GM12878 (cell line): ENCODE measurements at regions of chr19 and their contacts with region 1.

Region 1: DNA sequence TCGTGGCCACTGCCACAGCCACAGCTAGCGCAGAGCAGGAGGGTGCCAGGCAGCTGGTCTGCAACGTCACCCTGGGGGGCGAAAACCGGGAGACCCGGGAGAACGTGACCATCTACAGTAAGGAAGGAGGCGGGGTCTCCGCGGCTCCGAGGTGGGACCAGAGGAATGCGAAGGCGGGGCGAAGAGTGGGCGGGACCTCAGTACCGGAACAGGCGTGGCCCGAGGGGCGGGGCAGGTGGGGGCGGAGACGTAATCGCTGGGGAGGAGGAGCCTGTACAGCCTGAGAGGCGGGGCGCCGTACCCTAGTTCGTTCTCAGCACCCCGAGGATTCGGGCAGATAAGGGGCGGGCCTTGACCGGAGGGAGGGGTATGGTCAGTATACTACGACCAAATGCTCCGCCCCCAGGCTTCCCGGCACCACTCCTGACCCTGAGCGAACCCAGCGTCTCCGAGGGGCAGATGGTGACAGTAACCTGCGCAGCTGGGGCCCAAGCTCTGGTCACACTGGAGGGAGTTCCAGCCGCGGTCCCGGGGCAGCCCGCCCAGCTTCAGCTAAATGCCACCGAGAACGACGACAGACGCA is 2.5 kb downstream of the ICAM5 start:
- DNase-seq: no peak
- ATAC-seq: peak; percentile 65
- H3K4me3 ChIP-seq: peak overlapping the region; percentile 77
- H3K27ac ChIP-seq: no peak overlapping the region
- H3K4me1 ChIP-seq: peaks cover 53% of the 10 kb centered on the region
- H3K27me3 ChIP-seq: peaks cover 3 to 16% of the 10 kb centered on the region in 2 experiments
- CTCF ChIP-seq: no peak
- EP300 ChIP-seq: no peak
- POLR2A ChIP-seq: no peak
- RAD21 ChIP-seq: no peak

Region 2: DNA sequence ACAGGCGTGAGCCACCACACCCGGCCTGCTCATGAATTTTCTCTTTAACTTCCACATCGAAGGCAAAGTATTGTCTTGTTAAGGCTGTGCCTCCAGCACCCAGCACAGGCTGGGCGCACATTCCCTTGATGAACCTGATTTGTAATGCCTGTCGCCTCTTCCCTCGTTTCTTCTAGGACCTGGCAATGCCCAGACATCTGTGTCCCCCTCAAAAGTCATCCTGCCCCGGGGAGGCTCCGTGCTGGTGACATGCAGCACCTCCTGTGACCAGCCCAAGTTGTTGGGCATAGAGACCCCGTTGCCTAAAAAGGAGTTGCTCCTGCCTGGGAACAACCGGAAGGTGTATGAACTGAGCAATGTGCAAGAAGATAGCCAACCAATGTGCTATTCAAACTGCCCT is 17.7 kb before region 1 on chr19:
- CTCF ChIA-PET with region 1: interaction called, 58 read pairs
- POLR2A ChIA-PET with region 1: interaction called, 69 read pairs
- RAD21 ChIA-PET with region 1: interaction called, 119 read pairs
- SMC1A ChIA-PET with region 1: interaction called, 50 read pairs
- in situ Hi-C with region 1: no loop called
- intact Hi-C with region 1: no loop called
- DNase-seq: no peak
- ATAC-seq: no peak
- H3K4me3 ChIP-seq: peak overlapping the region; percentile 57
- H3K27ac ChIP-seq: 0 out of 2 replicates have a peak overlapping the region, but pooled peaks have one; percentile 4
- H3K4me1 ChIP-seq: no peaks in the 10 kb centered on the region; the same call in 1 of the 2 replicates
- H3K27me3 ChIP-seq: no peaks in the 10 kb centered on the region
- CTCF ChIP-seq: no peak
- EP300 ChIP-seq: no peak
- POLR2A ChIP-seq: no peak
- RAD21 ChIP-seq: no peak

Region 3: DNA sequence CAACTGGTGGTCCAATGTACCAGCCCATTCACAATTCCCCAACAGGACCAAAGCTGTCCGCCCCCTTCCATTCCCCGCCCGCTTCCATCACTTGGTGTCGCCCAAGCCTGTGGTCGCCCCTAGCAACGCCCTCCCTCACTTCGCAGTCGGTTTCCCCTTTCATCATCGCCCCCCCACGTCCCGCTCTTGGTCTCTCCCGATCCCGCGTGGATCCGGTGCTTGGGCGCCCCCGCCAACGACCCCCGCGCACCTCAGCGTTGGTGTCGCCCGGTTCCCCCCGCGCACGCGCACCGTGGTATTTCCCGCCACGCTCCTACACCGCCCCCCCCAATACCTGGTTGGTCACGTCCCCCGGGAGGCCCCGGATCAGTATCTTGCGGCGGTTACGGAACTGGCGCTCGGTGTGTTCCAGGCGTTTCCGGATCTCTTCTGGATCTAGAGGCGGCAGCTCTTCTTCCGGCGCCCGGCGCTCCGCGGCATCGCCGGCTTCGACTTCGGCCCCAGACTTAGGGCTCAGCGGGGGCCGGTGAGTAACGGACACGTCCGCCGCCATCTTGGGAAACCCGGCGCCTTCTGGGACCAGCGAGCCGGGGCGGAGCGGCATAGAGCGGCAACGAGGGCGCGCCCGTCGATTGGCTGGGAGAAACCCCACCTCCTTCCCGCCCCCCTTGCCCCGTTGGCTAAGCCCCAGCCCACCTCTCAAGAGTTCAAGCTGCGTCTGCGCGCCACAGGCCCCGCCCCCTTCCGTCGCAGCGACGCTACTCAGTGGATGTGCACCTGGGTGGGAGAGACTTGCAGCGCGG is 40.9 kb after region 1 on chr19 and contains the start of gene RAVER1:
- CTCF ChIA-PET with region 1: interaction called, 4 read pairs
- POLR2A ChIA-PET with region 1: interaction called, 11 read pairs
- RAD21 ChIA-PET with region 1: interaction called, 8 read pairs
- SMC1A ChIA-PET with region 1: interaction called, 4 read pairs
- in situ Hi-C with region 1: no loop called
- intact Hi-C with region 1: no loop called
- DNase-seq: peak; percentile 87
- ATAC-seq: peak; percentile 98
- H3K4me3 ChIP-seq: peak within 1 kb of the TSS; percentile 100
- H3K27ac ChIP-seq: peak within 1 kb of the TSS; percentile 92
- H3K4me1 ChIP-seq: peaks cover 16% of the 10 kb centered on the region
- H3K27me3 ChIP-seq: no peaks in the 10 kb centered on the region
- CTCF ChIP-seq: no peak
- EP300 ChIP-seq: peak; percentile 10 to 28; a peak in 1 of 4 replicates
- POLR2A ChIP-seq: peak; percentile 96
- RAD21 ChIP-seq: no peak
- polyA plus RNA-seq, gene RAVER1: 0.03 to 0.05 TPM

Region 4: DNA sequence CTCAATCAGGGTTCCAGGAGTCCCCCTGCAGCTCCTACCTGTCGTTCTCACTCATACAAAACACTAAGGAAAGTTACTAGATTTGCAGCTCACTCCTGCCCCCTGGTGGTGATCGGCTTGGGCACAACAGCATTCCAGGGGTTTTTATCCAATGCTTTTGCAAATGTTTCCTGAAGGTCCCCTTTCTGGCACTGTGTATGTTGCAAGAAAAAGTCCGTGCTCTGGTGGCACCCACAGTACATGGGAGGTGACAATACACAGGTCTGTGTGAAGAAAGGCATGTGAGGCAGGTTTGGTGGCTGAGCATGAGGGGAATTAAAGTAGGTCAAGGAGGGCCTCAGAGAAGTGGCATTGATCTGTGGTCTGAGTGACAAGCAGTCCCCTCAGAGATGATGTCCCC is 96.7 kb after region 1 on chr19:
- CTCF ChIA-PET with region 1: interaction called, 72 read pairs
- POLR2A ChIA-PET with region 1: interaction called, 4 read pairs
- RAD21 ChIA-PET with region 1: interaction called, 24 read pairs
- SMC1A ChIA-PET with region 1: interaction called, 16 read pairs
- in situ Hi-C with region 1: no loop called
- intact Hi-C with region 1: no loop called
- DNase-seq: peak; percentile 69
- ATAC-seq: peak; percentile 53
- H3K4me3 ChIP-seq: no peak overlapping the region
- H3K27ac ChIP-seq: no peak overlapping the region
- H3K4me1 ChIP-seq: peaks cover 10% of the 10 kb centered on the region
- H3K27me3 ChIP-seq: no peaks in the 10 kb centered on the region
- CTCF ChIP-seq: peak; percentile 88 to 95 (median 92)
- EP300 ChIP-seq: no peak
- POLR2A ChIP-seq: peak; percentile 46; the same call in 1 of the 2 replicates
- RAD21 ChIP-seq: peak; percentile 84